ENCODE measurements at regions of chr9 and their contacts with region 1.

Region 1: GRCh38 chr9:19102631-19103345 is at the start of gene HAUS6:
- DNase-seq: peak; percentile 98
- H3K4me3 ChIP-seq: peak within 1 kb of the TSS; percentile 55 to 75 (median 70)
- H3K27ac ChIP-seq: peak within 1 kb of the TSS; percentile 77 to 95 (median 88)
- H3K4me1 ChIP-seq: peaks cover 5 to 30% (median 12%) of the 10 kb centered on the region in 4 donors
- H3K27me3 ChIP-seq: no peaks in the 10 kb centered on the region
- CTCF ChIP-seq: peak; percentile 41 to 91 (median 59)
- EP300 ChIP-seq: no peak
- POLR2A ChIP-seq: peak; percentile 68
- total RNA-seq, gene HAUS6: 1.4 to 8.9 (median 6.3) TPM

Region 2: DNA sequence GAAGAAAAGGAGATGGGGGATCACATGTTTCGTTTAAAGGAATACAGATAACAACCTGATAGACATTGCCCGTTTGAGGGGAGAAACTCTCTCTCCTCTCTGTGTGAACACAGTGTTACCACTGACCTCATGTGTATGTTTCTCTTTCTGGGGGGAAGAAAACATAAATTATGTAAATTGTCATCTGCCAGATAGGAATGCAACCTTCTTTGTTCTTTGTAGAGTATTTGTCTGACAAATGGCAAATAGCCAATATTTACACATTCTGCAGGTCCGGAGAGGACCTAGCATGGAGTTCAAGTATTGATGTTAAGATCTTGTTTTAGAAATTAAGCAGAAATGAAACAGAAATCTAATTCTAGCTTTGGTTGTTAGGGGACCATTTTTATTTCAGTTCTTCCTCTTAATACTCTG is 346.1 kb before region 1 on chr9:
- in situ Hi-C with region 1: no loop called
- intact Hi-C with region 1: no loop called
- DNase-seq: no peak
- H3K4me3 ChIP-seq: no peak overlapping the region
- H3K27ac ChIP-seq: peak overlapping the region in 3 of 4 donors; percentile 17 to 30 (median 25)
- H3K4me1 ChIP-seq: peaks cover 0 to 5% (median 1%) of the 10 kb centered on the region in 4 donors
- H3K27me3 ChIP-seq: no peaks in the 10 kb centered on the region
- CTCF ChIP-seq: no peak
- EP300 ChIP-seq: no peak
- POLR2A ChIP-seq: no peak

Region 3: GRCh38 chr9:19174127-19174912 is 71.5 kb after region 1 on chr9:
- in situ Hi-C with region 1: loop called in 2 of 4 experiments (anchors 10 to 25 kb)
- intact Hi-C with region 1: no loop called
- DNase-seq: peak; percentile 56
- H3K4me3 ChIP-seq: peak overlapping the region in 1 of 4 donors; percentile 18
- H3K27ac ChIP-seq: no peak overlapping the region
- H3K4me1 ChIP-seq: peaks cover 0 to 16% (median 3%) of the 10 kb centered on the region in 4 donors
- H3K27me3 ChIP-seq: no peaks in the 10 kb centered on the region
- CTCF ChIP-seq: peak; percentile 41 to 59 (median 46)
- EP300 ChIP-seq: no peak
- POLR2A ChIP-seq: no peak

Region 4: GRCh38 chr9:19230356-19231125 is 127.8 kb after region 1 on chr9 and contains the start of gene DENND4C:
- in situ Hi-C with region 1: loop called in 1 of 4 experiments (anchors 25 kb)
- intact Hi-C with region 1: no loop called
- DNase-seq: peak; percentile 89
- H3K4me3 ChIP-seq: peak within 1 kb of the TSS; percentile 66 to 97 (median 78)
- H3K27ac ChIP-seq: peak within 1 kb of the TSS; percentile 90 to 98 (median 96)
- H3K4me1 ChIP-seq: peaks cover 4 to 37% (median 20%) of the 10 kb centered on the region in 4 donors
- H3K27me3 ChIP-seq: no peaks in the 10 kb centered on the region
- CTCF ChIP-seq: no peak
- EP300 ChIP-seq: no peak
- POLR2A ChIP-seq: peak; percentile 95
- total RNA-seq, gene DENND4C: 101 to 143 (median 110) TPM

Measured in transverse colon (tissue), 4 donors.